ENCODE measurements at regions of chr4 and their contacts with region 1.

Region 1: DNA sequence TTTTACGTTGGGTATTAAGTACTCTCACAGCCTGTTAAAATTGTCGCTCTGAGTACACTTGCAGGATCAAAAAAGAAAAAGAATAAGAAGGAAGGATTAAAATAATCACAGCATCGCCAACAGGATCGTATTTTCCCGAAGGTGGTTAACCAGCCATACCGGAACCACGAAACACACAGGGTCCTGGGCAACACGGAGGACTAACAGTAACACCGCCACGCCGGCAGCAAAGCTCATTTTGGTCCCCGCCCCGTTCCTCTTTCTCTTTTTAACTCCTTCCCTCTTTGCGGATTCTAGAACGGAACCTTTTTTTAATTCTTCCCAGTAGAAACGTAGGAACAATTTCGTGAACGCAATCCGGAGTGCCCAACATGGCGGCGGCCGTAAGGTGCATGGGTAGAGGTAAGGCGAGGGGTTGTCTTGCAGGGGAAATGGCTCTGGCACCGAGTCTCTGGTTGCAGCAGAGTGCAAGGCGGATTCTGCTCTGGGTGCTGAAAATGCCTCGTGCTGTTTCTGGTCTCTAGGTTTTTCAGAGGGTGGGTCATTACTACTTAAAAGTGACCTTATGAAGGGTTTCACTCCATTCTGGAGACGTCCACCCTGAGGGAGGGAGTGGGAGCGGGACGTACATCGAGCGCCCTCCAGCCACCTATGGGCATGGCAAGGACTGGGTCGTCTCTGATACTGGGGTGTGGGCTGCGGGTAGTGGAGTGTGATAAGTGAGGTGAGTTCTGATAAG is at the start of gene MRPL1:
- DNase-seq: peak; percentile 80 to 96
- ATAC-seq: peak; percentile 66 to 89 (median 76)
- H3K4me3 ChIP-seq: peak within 1 kb of the TSS; percentile 97
- H3K4me3 Mint-ChIP-seq: peak within 1 kb of the TSS; percentile 94
- H3K27ac ChIP-seq: peak within 1 kb of the TSS; percentile 100
- H3K27ac Mint-ChIP-seq: peak within 1 kb of the TSS; percentile 96 to 100
- H3K4me1 ChIP-seq: peaks cover 20% of the 10 kb centered on the region
- H3K4me1 Mint-ChIP-seq: peaks cover 53 to 64% of the 10 kb centered on the region in 2 donors
- H3K27me3 ChIP-seq: no peaks in the 10 kb centered on the region
- H3K27me3 Mint-ChIP-seq: no peaks in the 10 kb centered on the region
- CTCF ChIP-seq: no peak
- total RNA-seq, gene MRPL1: 17.9 to 22.9 (median 22.9) TPM

Region 2: GRCh38 chr4:77734928-77735327 is 127.7 kb before region 1 on chr4:
- intact Hi-C with region 1: loop called (anchors 5 kb)
- DNase-seq: peak; percentile 19 to 69
- ATAC-seq: peak; percentile 89 to 96 (median 91)
- H3K4me3 ChIP-seq: no peak overlapping the region
- H3K4me3 Mint-ChIP-seq: peak overlapping the region; percentile 84
- H3K27ac ChIP-seq: peak overlapping the region; percentile 47
- H3K27ac Mint-ChIP-seq: peak overlapping the region; percentile 87 to 89
- H3K4me1 ChIP-seq: peaks cover 3% of the 10 kb centered on the region
- H3K4me1 Mint-ChIP-seq: peaks cover 43 to 66% of the 10 kb centered on the region in 2 donors
- H3K27me3 ChIP-seq: no peaks in the 10 kb centered on the region
- H3K27me3 Mint-ChIP-seq: no peaks in the 10 kb centered on the region
- CTCF ChIP-seq: no peak

Measured in natural killer cell (primary cell).